Breast epithelium (tissue), 4 donors: ENCODE measurements at regions of chr13 and their contacts with region 1.

Region 1: DNA sequence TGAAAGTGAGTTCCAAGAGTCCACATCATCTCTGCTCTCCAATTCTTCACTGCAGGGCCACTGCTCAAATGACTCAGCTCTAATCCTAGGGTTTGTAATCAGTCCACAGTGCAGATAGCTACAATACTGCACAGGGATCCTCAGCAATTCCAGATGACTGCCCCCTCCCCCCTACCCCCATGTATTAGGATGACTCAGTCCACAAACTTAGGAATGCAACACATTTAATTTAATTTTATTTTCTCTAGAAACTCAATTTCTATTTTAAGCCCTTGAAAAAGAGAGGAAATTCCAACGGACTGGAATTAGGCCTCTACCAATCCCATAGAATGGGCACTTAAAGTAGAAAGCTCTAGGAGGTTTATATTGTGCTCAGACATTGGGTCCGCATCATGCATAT is 173.8 kb upstream of the SOX21 start:
- DNase-seq: no peak
- H3K4me3 ChIP-seq: no peak overlapping the region
- H3K27ac ChIP-seq: no peak overlapping the region
- H3K4me1 ChIP-seq: no peaks in the 10 kb centered on the region
- H3K27me3 ChIP-seq: no peaks in the 10 kb centered on the region
- CTCF ChIP-seq: no peak
- POLR2A ChIP-seq: no peak

Region 2: DNA sequence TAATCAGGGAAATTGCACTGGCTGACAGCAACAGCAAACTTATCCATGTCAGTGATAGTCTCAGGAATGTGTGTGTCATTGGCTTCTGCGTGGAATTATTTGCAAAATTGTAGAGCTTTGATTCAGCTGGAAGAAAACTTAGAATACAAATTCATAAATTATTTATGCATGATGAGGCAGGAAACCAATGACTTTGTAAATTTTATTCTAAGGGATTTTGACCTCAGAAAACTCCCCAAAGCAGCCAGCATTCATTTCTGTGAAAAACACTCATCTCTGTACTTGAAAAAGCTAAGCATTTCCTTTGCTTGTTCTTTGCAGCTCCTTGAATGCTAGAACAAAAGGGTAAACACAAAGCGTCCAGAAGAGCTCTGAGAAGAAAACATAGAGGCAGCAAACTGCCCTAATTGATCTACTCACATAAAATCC is 569.1 kb before region 1 on chr13:
- intact Hi-C with region 1: loop called (anchors 5 kb)
- DNase-seq: no peak
- H3K4me3 ChIP-seq: no peak overlapping the region
- H3K27ac ChIP-seq: no peak overlapping the region
- H3K4me1 ChIP-seq: no peaks in the 10 kb centered on the region
- H3K27me3 ChIP-seq: no peaks in the 10 kb centered on the region
- CTCF ChIP-seq: no peak
- POLR2A ChIP-seq: no peak

Region 3: DNA sequence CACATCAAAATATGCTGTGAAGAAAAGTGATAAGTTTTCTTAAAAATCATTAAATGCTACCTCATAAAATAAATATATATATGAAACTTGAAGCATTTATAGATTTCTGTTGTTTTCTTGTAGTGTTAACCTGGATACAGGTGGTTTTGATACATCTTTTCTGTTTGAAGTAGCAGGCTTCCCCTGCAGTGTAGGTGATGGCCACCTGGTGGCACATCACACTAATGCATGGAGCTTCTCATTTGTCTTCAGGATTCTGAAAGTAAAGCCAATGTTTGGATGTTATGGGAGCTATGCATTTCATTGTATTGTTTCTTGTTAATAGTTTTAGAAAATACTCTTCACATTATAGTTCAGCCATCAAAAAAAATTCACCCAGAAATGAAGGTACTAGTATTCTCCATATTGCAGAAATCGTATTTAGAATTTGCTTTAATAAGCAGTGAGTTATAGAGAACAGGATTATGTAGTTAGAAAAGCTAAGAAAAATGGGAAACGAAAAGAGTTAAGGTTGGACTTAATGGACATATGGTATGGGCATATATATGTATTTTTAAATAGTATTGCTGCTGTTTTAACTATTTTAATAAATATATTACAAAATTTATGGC is 265.8 kb before region 1 on chr13:
- intact Hi-C with region 1: no loop called
- DNase-seq: no peak
- H3K4me3 ChIP-seq: no peak overlapping the region
- H3K27ac ChIP-seq: no peak overlapping the region
- H3K4me1 ChIP-seq: no peaks in the 10 kb centered on the region
- H3K27me3 ChIP-seq: no peaks in the 10 kb centered on the region
- CTCF ChIP-seq: peak in 2 of 3 donors; percentile 34 to 42
- POLR2A ChIP-seq: no peak

Region 4: GRCh38 chr13:94859278-94859691 is 26.9 kb before region 1 on chr13:
- intact Hi-C with region 1: no loop called
- DNase-seq: peak in 1 of 2 donors; percentile 20
- H3K4me3 ChIP-seq: no peak overlapping the region
- H3K27ac ChIP-seq: peak overlapping the region in 1 of 2 donors; percentile 48
- H3K4me1 ChIP-seq: no peaks in the 10 kb centered on the region
- H3K27me3 ChIP-seq: no peaks in the 10 kb centered on the region
- CTCF ChIP-seq: no peak
- POLR2A ChIP-seq: no peak

Region 5: DNA sequence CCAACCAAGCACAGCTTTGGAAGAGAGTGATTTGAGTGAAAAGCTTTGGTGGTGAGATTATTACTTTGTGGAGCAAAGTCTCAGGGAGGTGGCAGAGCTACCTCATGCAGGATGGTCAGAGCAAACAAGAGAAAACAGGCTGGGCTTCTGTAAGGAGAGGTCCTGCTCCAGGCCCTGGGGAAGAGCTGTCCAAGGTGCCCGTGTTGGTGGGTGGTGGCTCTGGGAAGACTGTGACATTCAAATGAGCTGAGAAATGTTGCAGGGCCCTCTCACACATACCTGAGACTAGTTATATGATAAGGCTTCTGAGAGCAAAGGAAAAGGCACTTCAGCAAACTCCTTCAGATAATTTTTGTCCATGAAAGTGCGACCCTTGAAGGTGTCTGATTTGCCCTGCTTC is 31.6 kb after region 1 on chr13:
- intact Hi-C with region 1: no loop called
- DNase-seq: no peak
- H3K4me3 ChIP-seq: no peak overlapping the region
- H3K27ac ChIP-seq: no peak overlapping the region
- H3K4me1 ChIP-seq: no peaks in the 10 kb centered on the region
- H3K27me3 ChIP-seq: no peaks in the 10 kb centered on the region
- CTCF ChIP-seq: no peak
- POLR2A ChIP-seq: no peak